AG04450 (cell line): ENCODE measurements at regions of chr7 and their contacts with region 1.

Region 1: GRCh38 chr7:28013441-28013840 is 167.2 kb downstream of the JAZF1 start:
- DNase-seq: no peak
- H3K4me3 ChIP-seq: no peak overlapping the region
- H3K27ac ChIP-seq: no peak overlapping the region
- H3K27me3 ChIP-seq: no peaks in the 10 kb centered on the region
- CTCF ChIP-seq: no peak

Region 2: DNA sequence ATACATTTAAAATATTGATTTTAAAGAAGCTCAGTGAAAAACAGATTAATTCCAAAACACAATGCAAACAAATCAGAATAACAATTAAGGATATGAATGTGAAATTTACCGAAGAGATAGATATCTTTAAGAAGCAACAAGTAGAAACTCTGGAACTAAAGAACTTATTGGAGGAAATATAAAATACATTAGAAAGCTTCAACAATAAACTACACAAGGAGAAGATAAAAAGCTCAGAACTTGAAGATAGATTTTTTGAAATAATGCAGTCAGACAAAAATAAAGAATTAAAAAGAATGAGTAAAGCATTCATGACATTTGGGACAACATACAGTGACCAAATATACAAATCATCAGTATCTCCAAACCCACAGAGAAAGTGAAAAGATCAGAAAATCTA is 393.9 kb before region 1 on chr7:
- CTCF ChIA-PET with region 1: no interaction called
- POLR2A ChIA-PET with region 1: no interaction called
- DNase-seq: no peak
- H3K4me3 ChIP-seq: no peak overlapping the region
- H3K27ac ChIP-seq: no peak overlapping the region
- H3K27me3 ChIP-seq: no peaks in the 10 kb centered on the region
- CTCF ChIP-seq: no peak

Region 3: GRCh38 chr7:27712217-27712616 is 301.2 kb before region 1 on chr7:
- CTCF ChIA-PET with region 1: interaction called, 10 read pairs
- POLR2A ChIA-PET with region 1: no interaction called
- DNase-seq: no peak
- H3K4me3 ChIP-seq: no peak overlapping the region
- H3K27ac ChIP-seq: no peak overlapping the region
- H3K27me3 ChIP-seq: no peaks in the 10 kb centered on the region
- CTCF ChIP-seq: no peak

Region 4: DNA sequence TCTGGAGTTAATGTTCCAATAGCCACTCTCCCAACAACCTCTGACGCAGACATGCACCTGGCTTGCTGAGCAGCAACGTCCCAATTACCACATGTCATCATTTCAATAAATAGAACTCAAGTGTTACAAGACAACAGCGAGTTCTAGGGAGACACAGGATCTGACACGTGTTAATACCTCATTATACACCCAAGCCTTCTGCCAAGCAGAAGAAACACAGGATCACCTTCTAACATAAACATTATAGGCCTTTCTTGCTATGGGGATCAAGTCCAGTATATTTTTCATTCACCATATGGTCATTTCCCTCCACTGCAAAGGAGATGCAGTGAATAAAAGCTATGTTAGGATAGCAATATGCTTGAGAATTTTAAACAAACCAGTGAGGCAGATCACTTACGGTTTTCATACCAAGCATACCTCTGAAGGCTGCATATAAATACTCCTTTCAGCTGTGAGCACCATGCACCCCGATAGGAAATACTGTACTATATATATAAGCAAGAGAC is 92.9 kb after region 1 on chr7:
- CTCF ChIA-PET with region 1: no interaction called
- POLR2A ChIA-PET with region 1: no interaction called
- DNase-seq: peak; percentile 87
- H3K4me3 ChIP-seq: no peak overlapping the region
- H3K27ac ChIP-seq: peak overlapping the region; percentile 78
- H3K27me3 ChIP-seq: no peaks in the 10 kb centered on the region
- CTCF ChIP-seq: no peak